ENCODE measurements at regions of chr2 and their contacts with region 1.

Region 1: GRCh38 chr2:86623651-86624541 is at the start of gene RNF103:
- DNase-seq: peak; percentile 98 to 99 (median 98)
- ATAC-seq: peak; percentile 96 to 98 (median 97)
- H3K4me3 ChIP-seq: peak within 1 kb of the TSS; percentile 50 to 93 (median 86)
- H3K27ac ChIP-seq: peak within 1 kb of the TSS; percentile 96 to 100 (median 98)
- H3K4me1 ChIP-seq: peaks cover 0 to 32% (median 20%) of the 10 kb centered on the region in 12 donors
- H3K27me3 ChIP-seq: no peaks in the 10 kb centered on the region
- CTCF ChIP-seq: peak in 1 of 12 donors; percentile 14
- POLR2A ChIP-seq: peak; percentile 98 to 100
- total RNA-seq, gene RNF103: 37.9 to 75.4 (median 55.3) TPM

Region 2: DNA sequence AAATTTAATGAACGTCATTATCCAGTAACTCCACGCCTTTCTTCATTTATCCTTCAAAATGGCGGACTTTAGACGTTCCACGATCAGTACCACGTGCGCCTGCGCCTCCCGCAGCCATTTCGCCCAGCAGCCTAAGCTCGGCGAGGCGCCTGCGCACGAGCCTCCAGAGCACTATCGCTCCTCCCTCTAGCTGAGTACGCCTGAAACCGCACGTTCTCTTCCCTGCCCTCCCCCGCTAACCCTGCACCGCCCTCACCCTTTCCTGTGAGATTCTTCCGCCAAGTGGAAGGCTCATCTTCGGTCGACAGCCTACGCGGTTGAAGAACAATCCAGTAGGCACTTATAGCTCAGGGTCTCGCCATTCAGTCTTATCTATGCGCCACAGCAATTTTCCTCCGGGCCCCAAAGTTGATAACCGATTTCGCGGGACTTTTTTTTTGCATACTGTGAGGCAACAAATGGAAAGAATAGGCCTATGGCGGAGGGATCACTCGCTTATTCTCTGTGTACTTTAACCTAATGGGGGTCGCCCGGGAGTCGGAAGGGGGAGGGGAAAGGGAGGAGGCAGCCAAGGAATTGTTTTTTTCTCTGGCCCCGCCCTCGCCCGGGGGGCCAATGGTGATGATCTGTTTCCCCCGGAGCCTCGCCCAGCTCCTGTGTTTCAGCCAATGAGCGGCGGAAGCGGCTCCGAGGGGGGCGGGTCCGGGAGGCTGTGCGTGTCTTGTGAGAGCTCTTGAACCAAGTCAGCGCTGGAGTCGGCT is 183.1 kb before region 1 on chr2 and contains the start of gene KDM3A:
- intact Hi-C with region 1: loop called in 2 of 10 experiments (anchors 1 to 5 kb)
- DNase-seq: peak; percentile 99 to 100 (median 100)
- ATAC-seq: peak; percentile 94 to 96 (median 95)
- H3K4me3 ChIP-seq: peak within 1 kb of the TSS; percentile 67 to 97 (median 76)
- H3K27ac ChIP-seq: peak within 1 kb of the TSS; percentile 91 to 99 (median 96)
- H3K4me1 ChIP-seq: peaks cover 0 to 35% (median 31%) of the 10 kb centered on the region in 12 donors
- H3K27me3 ChIP-seq: no peaks in the 10 kb centered on the region
- CTCF ChIP-seq: peak in 2 of 12 donors; percentile 15 to 25
- POLR2A ChIP-seq: peak in 1 of 2 donors; percentile 99
- total RNA-seq, gene KDM3A: 17.7 to 44.0 (median 35.4) TPM

Region 3: DNA sequence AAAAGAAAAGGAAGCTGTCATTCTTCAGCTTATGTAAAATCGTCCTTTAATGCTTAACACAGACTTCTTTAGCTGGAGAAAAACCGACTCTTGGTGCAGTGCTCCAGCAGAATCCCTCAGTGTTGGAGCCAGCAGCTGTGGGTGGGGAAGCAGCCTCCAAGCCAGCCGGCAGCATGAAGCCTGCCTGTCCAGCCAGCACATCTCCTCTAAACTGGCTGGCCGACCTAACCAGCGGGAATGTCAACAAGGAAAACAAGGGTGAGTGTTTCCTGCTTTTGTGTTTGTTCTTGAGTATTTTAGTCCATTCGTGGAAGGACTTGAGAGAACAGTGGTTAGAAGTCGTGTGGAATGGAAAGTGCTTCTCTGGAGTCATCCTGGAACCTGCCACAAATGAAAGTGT is 143.8 kb before region 1 on chr2:
- intact Hi-C with region 1: loop called in 1 of 10 experiments (anchors 10 kb)
- DNase-seq: peak; percentile 12 to 65 (median 35)
- ATAC-seq: peak; percentile 57 to 69 (median 58)
- H3K4me3 ChIP-seq: no peak overlapping the region
- H3K27ac ChIP-seq: peak overlapping the region in 5 of 12 donors; percentile 9 to 62 (median 18)
- H3K4me1 ChIP-seq: peaks cover 3 to 60% (median 27%) of the 10 kb centered on the region in 12 donors
- H3K27me3 ChIP-seq: no peaks in the 10 kb centered on the region
- CTCF ChIP-seq: no peak
- POLR2A ChIP-seq: no peak

Region 4: GRCh38 chr2:86562922-86563649 is 60.8 kb before region 1 on chr2 and contains the start of gene CHMP3:
- intact Hi-C with region 1: loop called in 5 of 10 experiments (anchors 2 to 10 kb)
- DNase-seq: peak; percentile 96 to 99 (median 98)
- ATAC-seq: peak; percentile 97 to 99 (median 98)
- H3K4me3 ChIP-seq: peak within 1 kb of the TSS; percentile 67 to 97 (median 80)
- H3K27ac ChIP-seq: peak within 1 kb of the TSS; percentile 98 to 100 (median 99)
- H3K4me1 ChIP-seq: peaks cover 0 to 50% (median 29%) of the 10 kb centered on the region in 12 donors
- H3K27me3 ChIP-seq: no peaks in the 10 kb centered on the region
- CTCF ChIP-seq: no peak
- POLR2A ChIP-seq: peak in 1 of 2 donors; percentile 58
- total RNA-seq, gene CHMP3: 75.4 to 178 (median 145) TPM

Region 5: DNA sequence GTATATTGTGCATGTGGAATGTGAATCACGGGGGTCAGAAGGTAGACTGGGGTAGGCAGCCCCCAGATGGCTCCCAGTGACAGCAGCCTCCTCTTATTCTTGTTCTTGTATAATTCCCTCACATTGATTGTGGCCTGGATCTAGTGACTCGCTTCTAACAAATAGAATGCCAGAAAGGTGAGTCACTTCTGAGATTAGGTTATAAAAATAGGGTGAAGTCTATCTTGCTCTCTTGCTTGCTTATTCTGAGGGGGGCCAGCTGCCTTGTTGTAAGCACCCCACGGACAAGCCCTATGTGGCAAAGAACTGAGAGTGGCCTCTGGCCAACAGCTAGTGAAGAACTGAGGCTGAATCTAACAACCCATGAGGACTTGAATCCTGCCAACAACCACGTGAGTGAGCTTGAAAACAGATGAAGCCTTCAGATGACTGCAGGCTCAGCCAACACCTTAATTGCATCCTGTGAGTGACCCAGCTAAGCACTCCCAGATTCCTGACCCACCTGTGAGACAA is 80.6 kb after region 1 on chr2:
- intact Hi-C with region 1: loop called in 6 of 10 experiments (anchors 5 to 10 kb)
- DNase-seq: peak in 4 of 5 donors; percentile 63 to 86 (median 78)
- ATAC-seq: peak; percentile 91 to 94 (median 92)
- H3K4me3 ChIP-seq: peak overlapping the region in 5 of 12 donors; percentile 10 to 33 (median 23)
- H3K27ac ChIP-seq: peak overlapping the region; percentile 69 to 97 (median 87)
- H3K4me1 ChIP-seq: peaks cover 0 to 29% (median 2%) of the 10 kb centered on the region in 12 donors
- H3K27me3 ChIP-seq: no peaks in the 10 kb centered on the region
- CTCF ChIP-seq: no peak
- POLR2A ChIP-seq: no peak